ENCODE measurements at regions of chr10 and their contacts with region 1.

Region 1: DNA sequence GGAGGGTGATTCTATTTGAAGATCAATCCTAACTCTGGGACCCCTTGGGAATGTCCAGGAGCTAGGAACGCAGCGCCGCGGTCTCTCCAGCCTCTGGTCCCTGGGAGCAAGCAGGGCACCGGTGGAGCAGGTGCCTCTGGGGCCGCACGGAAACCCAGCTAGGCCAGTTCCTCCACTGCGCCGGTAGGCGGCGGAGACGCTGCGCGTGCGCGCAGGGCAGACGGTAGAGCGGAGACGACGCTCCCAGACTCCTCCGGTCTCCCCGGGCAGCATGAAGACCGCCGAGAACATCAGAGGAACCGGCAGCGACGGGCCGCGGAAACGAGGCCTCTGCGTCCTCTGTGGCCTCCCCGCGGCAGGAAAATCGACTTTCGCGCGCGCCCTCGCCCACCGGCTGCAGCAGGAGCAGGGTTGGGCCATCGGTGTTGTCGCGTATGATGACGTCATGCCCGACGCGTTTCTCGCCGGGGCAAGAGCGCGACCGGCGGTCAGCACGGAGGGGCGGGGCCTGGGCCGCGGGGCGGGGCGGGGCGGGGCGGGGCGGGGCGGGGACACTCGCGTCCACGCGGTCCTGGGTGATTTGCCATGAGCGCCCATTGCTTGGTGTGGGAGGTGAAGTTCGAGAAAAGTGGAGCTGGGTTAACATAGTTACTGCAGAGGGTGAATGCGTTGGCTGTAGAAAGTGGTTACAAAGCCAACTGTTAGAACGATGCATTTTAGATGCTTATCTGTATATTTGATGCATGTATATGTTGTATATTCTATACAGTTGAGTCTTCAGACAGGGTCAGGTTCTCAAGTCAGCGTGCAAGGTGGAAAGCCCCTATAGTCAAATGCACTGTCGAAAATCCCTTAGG is at the start of gene PSTK:
- DNase-seq: peak; percentile 88 to 95 (median 95)
- H3K4me3 ChIP-seq: peak within 1 kb of the TSS; percentile 78 to 94 (median 79)
- H3K4me3 Mint-ChIP-seq: peak within 1 kb of the TSS; percentile 84 to 90
- H3K27ac ChIP-seq: peak within 1 kb of the TSS; percentile 83 to 96
- H3K27ac Mint-ChIP-seq: peak within 1 kb of the TSS; percentile 91 to 98 (median 95)
- H3K4me1 ChIP-seq: peaks cover 14 to 16% of the 10 kb centered on the region in 2 donors
- H3K4me1 Mint-ChIP-seq: peaks cover 13% of the 10 kb centered on the region
- H3K27me3 ChIP-seq: peaks cover 3 to 6% of the 10 kb centered on the region in 2 donors
- H3K27me3 Mint-ChIP-seq: peaks cover 0 to 8% (median 3%) of the 10 kb centered on the region in 3 donors
- CTCF ChIP-seq: peak; percentile 97
- polyA plus RNA-seq, gene PSTK: 3.5 to 4.7 (median 4.2) TPM

Region 2: DNA sequence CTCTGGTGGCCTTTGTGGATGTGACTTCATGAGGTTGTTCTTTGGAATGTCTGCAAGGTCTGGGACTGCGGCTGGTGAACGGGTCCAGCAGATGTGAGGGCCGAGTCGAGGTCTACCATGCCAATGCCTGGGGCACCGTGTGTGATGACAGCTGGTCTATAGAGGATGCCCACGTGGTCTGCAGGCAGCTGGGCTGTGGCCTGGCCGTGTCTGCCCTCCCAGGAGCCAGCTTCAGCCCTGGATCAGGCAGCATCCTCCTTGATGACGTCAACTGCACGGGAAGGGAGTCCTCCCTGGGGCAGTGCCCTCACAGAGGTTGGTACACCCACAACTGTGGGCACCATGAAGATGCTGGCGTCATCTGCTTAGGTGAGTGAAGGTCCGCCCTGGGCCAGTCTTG is 181.7 kb before region 1 on chr10:
- intact Hi-C with region 1: no loop called
- DNase-seq: no peak
- H3K4me3 ChIP-seq: no peak overlapping the region
- H3K4me3 Mint-ChIP-seq: no peak overlapping the region
- H3K27ac ChIP-seq: no peak overlapping the region
- H3K27ac Mint-ChIP-seq: no peak overlapping the region
- H3K4me1 ChIP-seq: no peaks in the 10 kb centered on the region
- H3K4me1 Mint-ChIP-seq: no peaks in the 10 kb centered on the region
- H3K27me3 ChIP-seq: no peaks in the 10 kb centered on the region
- H3K27me3 Mint-ChIP-seq: peaks cover 2 to 4% (median 2%) of the 10 kb centered on the region in 3 donors
- CTCF ChIP-seq: no peak

Region 3: DNA sequence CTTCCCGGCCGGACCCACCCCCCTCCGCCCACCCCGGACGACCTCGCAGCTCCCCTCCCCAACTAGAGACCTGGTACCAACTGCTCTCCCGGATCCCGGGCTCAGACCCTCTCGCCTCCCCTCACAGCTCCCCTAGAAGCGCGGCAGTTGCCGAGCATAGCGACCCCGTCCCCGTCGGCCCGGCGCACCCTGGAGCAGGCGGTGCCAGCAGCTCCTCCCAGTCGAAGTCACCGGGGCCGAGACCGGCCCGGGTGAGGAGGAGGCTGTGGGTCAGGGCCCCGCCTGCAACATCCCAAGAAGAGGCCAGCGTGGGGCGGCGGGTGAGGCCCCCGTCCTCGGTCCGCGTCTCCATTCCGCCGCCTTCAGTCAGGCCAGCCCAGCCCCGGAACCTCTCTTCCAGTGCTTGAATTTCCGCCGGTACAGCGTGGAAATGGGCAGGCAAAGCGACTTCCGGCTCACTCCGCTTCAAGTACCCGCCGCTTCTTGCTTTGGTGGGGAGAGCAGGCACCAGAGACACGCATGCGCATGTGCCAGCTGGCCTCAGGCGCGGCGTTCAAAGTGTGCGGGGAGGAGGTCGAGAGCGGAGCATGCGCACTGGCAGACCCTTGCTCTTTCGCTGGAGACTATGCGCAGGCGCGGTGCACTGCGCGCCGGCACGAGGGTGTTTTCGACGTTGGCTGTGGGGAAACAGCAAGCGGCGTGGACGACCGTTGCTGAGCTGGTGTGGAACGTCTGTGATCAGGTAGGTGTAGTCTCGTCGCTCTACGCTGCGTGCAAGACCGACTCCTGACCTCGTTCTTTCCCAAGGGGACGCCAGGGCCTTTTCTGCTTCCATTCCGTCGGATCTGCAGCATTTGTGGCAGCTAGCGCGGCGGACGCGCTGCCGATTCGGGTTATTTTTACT is 26.4 kb before region 1 on chr10 and contains the start of gene C10orf88:
- intact Hi-C with region 1: loop called (anchors 2 kb)
- DNase-seq: peak; percentile 99
- H3K4me3 ChIP-seq: peak within 1 kb of the TSS; percentile 52 to 79 (median 69)
- H3K4me3 Mint-ChIP-seq: peak within 1 kb of the TSS; percentile 81 to 88
- H3K27ac ChIP-seq: peak within 1 kb of the TSS; percentile 46 to 75
- H3K27ac Mint-ChIP-seq: peak within 1 kb of the TSS; percentile 46 to 83 (median 64)
- H3K4me1 ChIP-seq: peaks cover 12 to 15% of the 10 kb centered on the region in 2 donors
- H3K4me1 Mint-ChIP-seq: peaks cover 18% of the 10 kb centered on the region
- H3K27me3 ChIP-seq: peaks cover 2 to 16% of the 10 kb centered on the region in 2 donors
- H3K27me3 Mint-ChIP-seq: peaks cover 9 to 17% (median 15%) of the 10 kb centered on the region in 3 donors
- CTCF ChIP-seq: no peak
- polyA plus RNA-seq, gene C10orf88: 2.2 to 2.9 (median 2.7) TPM